ENCODE measurements at regions of chr3 and their contacts with region 1.

Region 1: GRCh38 chr3:133040696-133041523 is 2.7 kb downstream of the TMEM108 start:
- DNase-seq: peak; percentile 77
- ATAC-seq: peak; percentile 73 to 76

Region 2: GRCh38 chr3:132730891-132731580 is 309.9 kb before region 1 on chr3:
- intact Hi-C with region 1: loop called (anchors 5 to 10 kb)
- DNase-seq: no peak
- ATAC-seq: peak; percentile 85 to 86

Region 3: DNA sequence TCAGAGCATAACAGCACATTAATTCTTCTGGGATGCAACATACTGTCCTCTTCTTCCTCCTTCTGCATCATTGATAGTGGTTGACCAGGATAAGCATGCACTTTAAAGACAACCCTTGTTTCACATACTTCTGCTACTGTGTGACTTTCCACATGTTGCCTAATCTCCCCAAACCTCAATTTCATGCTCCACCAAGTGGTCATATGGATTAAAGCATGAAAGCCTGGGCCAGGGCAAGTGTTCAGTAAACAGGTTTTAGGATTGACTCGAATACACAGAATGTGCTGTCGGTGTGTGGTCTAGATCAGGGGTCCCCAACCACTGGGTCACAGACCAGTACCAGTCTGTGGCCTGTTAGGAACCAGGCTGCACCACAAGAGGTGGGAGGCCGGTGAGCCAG is 336.5 kb after region 1 on chr3:
- intact Hi-C with region 1: loop called (anchors 1 to 2 kb)
- DNase-seq: no peak
- ATAC-seq: peak; percentile 70 to 79

Region 4: GRCh38 chr3:133384331-133385027 is 343.6 kb after region 1 on chr3:
- intact Hi-C with region 1: loop called (anchors 2 kb)
- DNase-seq: peak; percentile 73
- ATAC-seq: peak; percentile 91 to 92